ENCODE measurements at regions of chr19 and their contacts with region 1.

Region 1: DNA sequence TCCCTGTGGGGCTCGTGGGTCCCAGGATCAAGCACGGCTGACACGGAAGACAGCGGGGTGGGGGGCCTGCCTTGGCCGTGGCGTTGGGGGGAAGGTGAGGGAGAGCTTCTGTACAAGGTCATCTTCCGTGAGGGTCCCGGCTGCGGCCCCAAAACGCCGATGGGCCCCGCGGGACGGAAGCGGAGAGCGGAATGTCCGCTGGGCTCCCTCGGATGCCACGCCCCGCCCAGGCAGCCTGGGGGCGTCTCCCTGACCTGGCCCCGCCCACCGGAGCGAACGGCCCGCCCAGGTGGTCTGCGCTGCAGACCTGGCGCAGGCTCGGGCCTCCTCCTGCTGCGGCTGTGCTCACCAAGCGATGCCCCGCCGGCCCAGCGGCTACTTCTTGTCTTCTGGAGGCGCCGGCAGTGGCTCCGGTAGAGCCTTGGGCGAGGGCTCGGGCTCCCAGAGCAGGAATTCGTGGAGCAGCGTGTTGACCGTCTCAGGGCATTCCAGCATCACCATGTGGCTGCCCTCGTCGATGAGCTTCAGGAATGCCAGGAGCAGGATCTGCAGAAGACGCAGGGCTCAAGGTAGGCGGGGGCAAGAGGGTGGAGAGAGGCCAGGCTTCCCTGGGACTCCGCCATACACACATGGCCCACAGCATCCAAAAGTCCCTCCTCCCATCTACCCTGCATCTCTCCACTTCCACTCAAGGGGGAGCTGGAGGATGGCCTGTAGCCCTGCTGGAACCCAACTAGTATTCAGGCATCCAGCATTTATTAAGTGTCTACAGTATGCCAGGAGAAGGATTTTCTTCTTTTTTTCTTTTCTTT is 10.7 kb downstream of the ABHD8 start:
- DNase-seq: peak; percentile 86 to 89
- H3K4me3 ChIP-seq: peak overlapping the region; percentile 65
- H3K27ac ChIP-seq: peak overlapping the region; percentile 63
- H3K4me1 ChIP-seq: peaks cover 35% of the 10 kb centered on the region
- H3K27me3 ChIP-seq: no peaks in the 10 kb centered on the region
- CTCF ChIP-seq: peak; percentile 77

Region 2: GRCh38 chr19:17327651-17328516 is 35.4 kb after region 1 on chr19:
- CTCF ChIA-PET with region 1: interaction called, 9 read pairs
- POLR2A ChIA-PET with region 1: no interaction called
- intact Hi-C with region 1: loop called (anchors 5 kb)
- DNase-seq: peak; percentile 86 to 87
- H3K4me3 ChIP-seq: peak overlapping the region; percentile 79
- H3K27ac ChIP-seq: peak overlapping the region; percentile 33; the same call in 1 of the 2 replicates
- H3K4me1 ChIP-seq: peaks cover 23% of the 10 kb centered on the region
- H3K27me3 ChIP-seq: no peaks in the 10 kb centered on the region
- CTCF ChIP-seq: peak; percentile 70

Region 3: GRCh38 chr19:17336872-17337722 is 44.6 kb after region 1 on chr19 and contains the start of gene GTPBP3:
- CTCF ChIA-PET with region 1: interaction called, 11 read pairs
- POLR2A ChIA-PET with region 1: no interaction called
- intact Hi-C with region 1: no loop called
- DNase-seq: peak; percentile 94 to 99
- H3K4me3 ChIP-seq: peak within 1 kb of the TSS; percentile 74
- H3K27ac ChIP-seq: peak within 1 kb of the TSS; percentile 62
- H3K4me1 ChIP-seq: peaks cover 32% of the 10 kb centered on the region
- H3K27me3 ChIP-seq: no peaks in the 10 kb centered on the region
- CTCF ChIP-seq: no peak
- total RNA-seq, gene GTPBP3: 48.8 and 50.7 TPM in 2 replicates

Region 4: DNA sequence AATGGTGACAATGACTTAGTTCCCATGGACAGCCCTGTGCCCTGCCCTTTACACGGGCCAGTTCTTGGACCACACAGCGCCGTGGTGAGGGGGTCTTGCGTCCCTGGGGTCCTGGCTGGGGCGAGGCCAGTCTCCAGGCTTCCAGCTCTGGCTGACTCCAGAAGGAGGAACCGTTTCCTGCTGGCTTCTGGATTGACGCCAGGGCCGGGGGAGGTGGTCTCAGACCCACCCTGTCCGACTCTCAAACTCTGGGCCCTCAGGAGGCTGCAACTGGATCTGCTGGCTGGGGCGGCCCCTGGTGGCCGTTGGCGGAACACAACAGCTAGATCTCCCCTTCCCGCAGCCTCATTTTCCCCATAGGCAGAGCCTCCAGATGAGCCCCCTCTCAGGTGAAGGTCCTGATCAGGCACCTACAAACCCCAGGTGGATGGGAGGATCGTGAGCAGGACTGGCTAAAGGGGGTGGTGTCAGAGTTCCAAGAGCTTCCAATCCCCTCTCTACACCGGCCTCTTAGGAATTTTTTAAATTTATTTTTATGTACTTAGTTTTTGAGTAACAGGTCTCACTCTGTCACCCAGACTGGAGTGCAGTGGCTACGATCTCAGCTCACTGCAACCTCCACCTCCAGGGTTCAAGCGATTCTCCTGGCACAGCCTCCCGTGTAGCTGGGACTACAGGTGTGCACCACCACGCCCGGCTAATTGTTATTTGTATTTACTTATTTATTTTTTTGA is 93.6 kb after region 1 on chr19:
- CTCF ChIA-PET with region 1: interaction called, 4 read pairs
- POLR2A ChIA-PET with region 1: no interaction called
- intact Hi-C with region 1: loop called (anchors 2 kb)
- DNase-seq: peak in 1 of 2 experiments; percentile 55
- H3K4me3 ChIP-seq: no peak overlapping the region
- H3K27ac ChIP-seq: no peak overlapping the region
- H3K4me1 ChIP-seq: peaks cover 9% of the 10 kb centered on the region
- H3K27me3 ChIP-seq: no peaks in the 10 kb centered on the region
- CTCF ChIP-seq: peak; percentile 97

Region 5: GRCh38 chr19:17803264-17803922 is 510.9 kb after region 1 on chr19:
- CTCF ChIA-PET with region 1: interaction called, 11 read pairs
- POLR2A ChIA-PET with region 1: no interaction called
- intact Hi-C with region 1: no loop called
- DNase-seq: peak in 1 of 2 experiments; percentile 5
- H3K4me3 ChIP-seq: no peak overlapping the region
- H3K27ac ChIP-seq: no peak overlapping the region
- H3K4me1 ChIP-seq: peaks cover 15% of the 10 kb centered on the region
- H3K27me3 ChIP-seq: no peaks in the 10 kb centered on the region
- CTCF ChIP-seq: no peak